Activated CD8-positive, alpha-beta T cell treated with anti-CD3 and anti-CD28 coated beads for 36 hours (primary cell): ENCODE measurements at regions of chr1 and their contacts with region 1.

Region 1: GRCh38 chr1:26126321-26127084 is 14.9 kb downstream of the PDIK1L start:
- DNase-seq: peak; percentile 67
- ATAC-seq: peak; percentile 93
- H3K4me3 Mint-ChIP-seq: peak overlapping the region; percentile 71
- H3K27ac Mint-ChIP-seq: peak overlapping the region; percentile 91
- H3K4me1 Mint-ChIP-seq: peaks cover 41% of the 10 kb centered on the region
- H3K27me3 Mint-ChIP-seq: peaks cover 2% of the 10 kb centered on the region
- CTCF ChIP-seq: no peak

Region 2: DNA sequence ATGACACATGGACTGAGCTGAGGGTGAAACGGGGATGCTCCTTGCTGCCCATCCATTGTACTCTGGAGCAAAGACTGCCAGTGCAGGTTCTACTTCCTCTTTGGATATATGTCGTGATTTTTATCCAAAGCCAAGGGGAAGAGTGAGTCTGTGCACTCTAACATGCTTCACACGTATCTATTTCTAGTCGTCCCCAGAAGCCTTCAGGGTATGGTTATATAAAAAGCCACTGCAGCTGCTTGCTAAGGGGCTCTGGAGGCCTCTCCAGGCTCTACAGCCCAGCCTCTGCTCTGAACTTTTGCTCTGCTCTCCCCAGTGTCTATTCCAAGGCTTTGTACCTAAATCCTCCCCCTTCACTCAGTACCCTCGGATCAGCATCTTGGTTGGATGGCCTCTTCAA is 148.7 kb before region 1 on chr1:
- CTCF ChIA-PET with region 1: no interaction called
- POLR2A ChIA-PET with region 1: no interaction called
- intact Hi-C with region 1: no loop called
- DNase-seq: no peak
- ATAC-seq: no peak
- H3K4me3 Mint-ChIP-seq: no peak overlapping the region
- H3K27ac Mint-ChIP-seq: no peak overlapping the region
- H3K4me1 Mint-ChIP-seq: peaks cover 9% of the 10 kb centered on the region
- H3K27me3 Mint-ChIP-seq: no peaks in the 10 kb centered on the region
- CTCF ChIP-seq: no peak

Region 3: GRCh38 chr1:26111530-26112406 is 14.7 kb before region 1 on chr1 and contains the start of gene PDIK1L:
- CTCF ChIA-PET with region 1: interaction called, 18 read pairs
- POLR2A ChIA-PET with region 1: interaction called, 23 read pairs
- intact Hi-C with region 1: no loop called
- DNase-seq: peak; percentile 93
- ATAC-seq: peak; percentile 89
- H3K4me3 Mint-ChIP-seq: peak within 1 kb of the TSS; percentile 96
- H3K27ac Mint-ChIP-seq: peak within 1 kb of the TSS; percentile 88
- H3K4me1 Mint-ChIP-seq: peaks cover 22% of the 10 kb centered on the region
- H3K27me3 Mint-ChIP-seq: no peaks in the 10 kb centered on the region
- CTCF ChIP-seq: no peak
- total RNA-seq, gene PDIK1L: 11.7 to 13.4 TPM